ENCODE measurements at regions of chr7 and their contacts with region 1.

Region 1: GRCh38 chr7:139075031-139075652 is 34.4 kb downstream of the ZC3HAV1 start:
- DNase-seq: peak; percentile 80
- H3K4me3 Mint-ChIP-seq: peak overlapping the region; percentile 13
- H3K27ac Mint-ChIP-seq: peak overlapping the region; percentile 82
- H3K4me1 Mint-ChIP-seq: peaks cover 83% of the 10 kb centered on the region
- H3K27me3 Mint-ChIP-seq: no peaks in the 10 kb centered on the region

Region 2: DNA sequence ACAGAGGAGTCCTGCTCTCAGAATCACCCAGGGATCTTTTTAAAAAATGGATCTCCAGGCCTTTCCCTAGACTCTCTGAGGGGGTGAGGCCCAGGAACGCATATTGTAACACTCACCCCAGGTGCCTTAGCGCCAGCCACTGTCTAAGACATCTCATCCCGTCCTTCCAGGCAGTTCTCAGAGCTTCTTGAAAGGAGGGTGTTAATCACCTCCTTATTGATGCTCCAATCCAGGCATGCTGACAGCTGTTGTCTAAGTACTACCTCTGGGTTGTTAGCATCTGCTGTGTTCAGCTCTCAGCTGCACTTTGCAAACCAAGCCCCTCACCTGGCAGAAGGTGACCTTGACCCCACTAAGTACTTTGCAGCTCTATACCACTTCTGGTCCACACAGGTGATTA is 130.0 kb before region 1 on chr7:
- CTCF ChIA-PET with region 1: no interaction called
- DNase-seq: no peak
- H3K4me3 Mint-ChIP-seq: no peak overlapping the region
- H3K27ac Mint-ChIP-seq: no peak overlapping the region
- H3K4me1 Mint-ChIP-seq: no peaks in the 10 kb centered on the region
- H3K27me3 Mint-ChIP-seq: peaks cover 21% of the 10 kb centered on the region

Region 3: GRCh38 chr7:139058943-139059342 is 16.2 kb before region 1 on chr7:
- CTCF ChIA-PET with region 1: interaction called, 53 read pairs
- DNase-seq: no peak
- H3K4me3 Mint-ChIP-seq: no peak overlapping the region
- H3K27ac Mint-ChIP-seq: peak overlapping the region; percentile 46
- H3K4me1 Mint-ChIP-seq: peaks cover 53% of the 10 kb centered on the region
- H3K27me3 Mint-ChIP-seq: no peaks in the 10 kb centered on the region

Region 4: DNA sequence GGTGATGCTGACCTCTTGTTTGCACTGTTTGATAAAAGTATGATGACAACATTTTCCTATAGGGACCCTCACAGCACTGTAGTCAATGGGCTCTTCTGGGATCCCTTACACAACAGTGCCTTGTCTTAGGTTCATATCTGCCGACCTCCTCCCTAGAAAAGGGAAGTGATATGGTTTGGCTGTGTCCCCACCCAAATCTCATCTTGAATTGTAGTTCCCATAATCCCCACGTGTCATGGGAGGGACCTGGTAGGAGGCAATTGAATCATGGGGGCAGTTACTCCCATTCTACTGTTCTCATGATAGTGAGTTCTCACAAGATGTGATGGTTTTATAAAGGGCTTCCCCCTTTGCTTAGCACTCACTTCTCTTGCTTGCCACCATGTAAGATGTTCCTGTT is 11.3 kb after region 1 on chr7:
- CTCF ChIA-PET with region 1: interaction called, 14 read pairs
- DNase-seq: no peak
- H3K4me3 Mint-ChIP-seq: no peak overlapping the region
- H3K27ac Mint-ChIP-seq: peak overlapping the region; percentile 69
- H3K4me1 Mint-ChIP-seq: peaks cover 89% of the 10 kb centered on the region
- H3K27me3 Mint-ChIP-seq: no peaks in the 10 kb centered on the region

Measured in activated naive CD4-positive, alpha-beta T cell treated with anti-CD3 and anti-CD28 coated beads, Interleukin-2, amount 10 ng/mL, durations not matched to agents 7 days and 5 days (primary cell).